Gastrocnemius medialis (tissue), 4 donors: ENCODE measurements at regions of chr15 and their contacts with region 1.

Region 1: DNA sequence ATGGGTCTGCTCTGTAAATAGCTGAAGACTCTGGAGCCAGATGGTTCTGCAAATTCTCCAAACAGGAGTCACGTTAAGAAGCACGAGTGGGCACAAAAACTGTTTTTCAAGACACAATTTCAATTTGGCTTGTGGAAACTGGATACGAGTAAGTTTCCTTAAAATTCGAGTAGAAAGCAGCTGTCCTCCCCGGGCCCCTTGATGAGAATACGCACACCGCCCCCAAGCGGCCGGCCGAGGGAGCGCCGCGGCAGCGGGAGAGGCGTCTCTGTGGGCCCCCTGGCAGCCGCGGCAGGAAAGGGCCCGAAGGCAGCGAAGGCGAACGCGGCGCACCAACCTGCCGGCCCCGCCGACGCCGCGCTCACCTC is 778 bp upstream of the THBS1 start:
- DNase-seq: peak; percentile 56 to 82
- ATAC-seq: peak; percentile 84 to 87
- H3K4me3 ChIP-seq: peak overlapping the region; percentile 55 to 63 (median 58)
- H3K27ac ChIP-seq: peak overlapping the region; percentile 66 to 75 (median 68)
- H3K4me1 ChIP-seq: peaks cover 7 to 12% of the 10 kb centered on the region in 2 donors
- H3K27me3 ChIP-seq: peaks cover 0 to 6% (median 4%) of the 10 kb centered on the region in 3 donors
- CTCF ChIP-seq: peak; percentile 83 to 90 (median 86)
- POLR2A ChIP-seq: no peak

Region 2: DNA sequence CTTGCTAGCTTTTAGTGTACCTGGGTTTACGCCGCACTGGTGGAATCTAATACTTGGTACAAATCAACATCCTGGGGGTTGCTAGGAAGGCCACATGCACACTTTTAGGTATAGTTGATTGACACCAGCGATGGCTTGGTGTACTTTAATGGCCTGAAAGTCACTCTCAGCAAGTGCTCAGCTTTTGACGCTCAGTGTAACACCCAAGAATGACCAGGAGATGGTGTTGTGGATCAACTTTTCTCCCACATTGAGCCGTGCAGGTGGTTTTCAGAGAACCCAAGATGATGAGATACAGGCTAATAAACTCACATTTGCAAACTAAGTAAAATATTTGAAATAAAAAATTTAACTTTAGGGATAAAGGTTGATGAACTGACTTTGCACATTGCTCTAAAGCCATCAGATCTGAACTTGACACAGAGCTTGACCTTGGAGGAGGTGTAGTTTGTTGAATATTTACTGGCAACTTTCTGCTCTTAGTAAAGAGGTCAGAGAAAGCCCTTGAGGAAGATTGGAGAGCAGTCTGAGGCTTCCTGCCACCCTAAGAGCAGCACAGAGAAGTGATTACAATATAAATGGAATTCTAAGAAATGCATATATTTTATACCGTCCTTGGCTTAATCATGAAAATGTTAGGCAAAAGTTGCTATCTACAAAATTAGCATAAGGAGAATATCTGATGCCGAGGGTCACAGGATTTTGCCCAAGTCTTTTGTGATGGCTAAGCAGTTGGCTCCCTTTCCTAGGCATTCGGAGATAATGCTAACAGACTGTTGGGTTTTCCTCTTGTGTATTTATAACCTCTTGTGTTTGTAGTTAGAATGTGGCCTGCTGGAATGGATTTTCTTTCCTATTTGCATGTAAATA is 872.1 kb before region 1 on chr15:
- in situ Hi-C with region 1: no loop called
- intact Hi-C with region 1: loop called (anchors 5 kb)
- DNase-seq: no peak
- ATAC-seq: peak; percentile 63 to 65
- H3K4me3 ChIP-seq: no peak overlapping the region
- H3K27ac ChIP-seq: no peak overlapping the region
- H3K4me1 ChIP-seq: no peaks in the 10 kb centered on the region
- H3K27me3 ChIP-seq: peaks cover 0 to 7% (median 0%) of the 10 kb centered on the region in 3 donors
- CTCF ChIP-seq: peak in 4 of 5 experiments; percentile 33 to 57 (median 50)
- POLR2A ChIP-seq: no peak

Region 3: DNA sequence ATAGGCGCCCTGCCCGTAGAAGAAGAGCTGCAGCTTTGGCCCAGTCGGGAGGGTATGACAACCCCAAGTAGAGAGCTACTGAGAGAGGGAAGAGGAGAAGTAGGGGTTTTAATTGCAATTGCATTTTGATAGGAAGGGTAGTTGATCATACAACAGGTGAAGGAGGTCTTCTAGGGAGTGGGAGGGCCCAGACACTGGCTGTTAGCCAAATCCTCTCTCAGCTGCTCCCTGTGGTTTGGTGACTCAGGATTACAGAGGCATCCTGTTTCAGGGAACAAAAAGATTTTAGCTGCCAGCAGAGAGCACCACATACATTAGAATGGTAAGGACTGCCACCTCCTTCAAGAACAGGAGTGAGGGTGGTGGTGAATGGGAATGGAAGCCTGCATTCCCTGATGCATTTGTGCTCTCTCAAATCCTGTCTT is 408.1 kb before region 1 on chr15:
- in situ Hi-C with region 1: loop called in 2 of 4 experiments (anchors 10 to 25 kb)
- intact Hi-C with region 1: loop called (anchors 2 kb)
- DNase-seq: peak; percentile 6 to 52
- ATAC-seq: peak; percentile 71 to 81
- H3K4me3 ChIP-seq: no peak overlapping the region
- H3K27ac ChIP-seq: peak overlapping the region in 1 of 4 donors; percentile 40
- H3K4me1 ChIP-seq: no peaks in the 10 kb centered on the region
- H3K27me3 ChIP-seq: no peaks in the 10 kb centered on the region
- CTCF ChIP-seq: peak in 2 of 5 experiments; percentile 8 to 16
- POLR2A ChIP-seq: no peak